HEK293 (cell line): ENCODE measurements at regions of chr19 and their contacts with region 1.

Region 1: GRCh38 chr19:44770550-44771257 is 7.0 kb upstream of the CBLC start:
- H3K4me3 ChIP-seq: no peak overlapping the region
- H3K27ac ChIP-seq: no peak overlapping the region
- H3K4me1 ChIP-seq: 0 out of 2 replicates have a peak, but pooled peaks cover 4% of the 10 kb centered on the region
- CTCF ChIP-seq: peak; percentile 77

Region 2: GRCh38 chr19:44576843-44577565 is 193.7 kb before region 1 on chr19:
- CTCF ChIA-PET with region 1: interaction called, 30 read pairs
- POLR2A ChIA-PET with region 1: no interaction called
- H3K4me3 ChIP-seq: no peak overlapping the region
- H3K27ac ChIP-seq: no peak overlapping the region
- H3K4me1 ChIP-seq: no peaks in the 10 kb centered on the region
- CTCF ChIP-seq: peak; percentile 50

Region 3: DNA sequence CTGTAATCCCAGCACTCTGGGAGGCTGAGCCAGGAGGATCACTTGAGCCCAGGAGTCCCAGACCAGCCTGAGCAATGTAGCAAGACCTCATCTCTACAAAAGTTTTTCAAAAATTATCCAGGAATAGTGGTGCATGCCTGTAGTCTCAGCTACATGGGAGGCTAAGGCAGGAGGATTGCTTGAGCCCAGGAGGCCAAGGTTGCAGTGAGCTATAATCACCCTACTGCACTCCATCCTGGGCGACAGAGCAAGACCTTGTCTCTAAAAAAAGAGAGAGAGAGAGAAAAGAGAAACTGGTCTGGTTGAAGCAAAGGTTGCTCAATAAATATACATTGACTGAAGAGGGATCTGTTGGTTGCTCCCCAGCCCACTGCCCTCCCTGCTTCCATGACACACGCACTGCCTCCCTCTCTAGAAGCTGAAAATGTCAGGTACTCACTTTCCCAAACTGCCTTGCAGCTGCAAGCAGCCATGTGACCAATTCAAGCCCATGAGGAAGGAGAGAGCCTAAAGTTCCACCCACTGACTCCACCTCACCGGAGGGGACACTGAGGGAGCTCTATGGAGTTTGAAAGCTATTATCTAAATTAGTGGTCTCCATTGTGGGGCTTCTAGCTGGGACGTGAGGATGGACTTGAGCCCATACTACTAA is 57.7 kb before region 1 on chr19:
- CTCF ChIA-PET with region 1: interaction called, 14 read pairs
- POLR2A ChIA-PET with region 1: interaction called, 7 read pairs
- H3K4me3 ChIP-seq: no peak overlapping the region
- H3K27ac ChIP-seq: no peak overlapping the region
- H3K4me1 ChIP-seq: no peaks in the 10 kb centered on the region
- CTCF ChIP-seq: no peak

Region 4: DNA sequence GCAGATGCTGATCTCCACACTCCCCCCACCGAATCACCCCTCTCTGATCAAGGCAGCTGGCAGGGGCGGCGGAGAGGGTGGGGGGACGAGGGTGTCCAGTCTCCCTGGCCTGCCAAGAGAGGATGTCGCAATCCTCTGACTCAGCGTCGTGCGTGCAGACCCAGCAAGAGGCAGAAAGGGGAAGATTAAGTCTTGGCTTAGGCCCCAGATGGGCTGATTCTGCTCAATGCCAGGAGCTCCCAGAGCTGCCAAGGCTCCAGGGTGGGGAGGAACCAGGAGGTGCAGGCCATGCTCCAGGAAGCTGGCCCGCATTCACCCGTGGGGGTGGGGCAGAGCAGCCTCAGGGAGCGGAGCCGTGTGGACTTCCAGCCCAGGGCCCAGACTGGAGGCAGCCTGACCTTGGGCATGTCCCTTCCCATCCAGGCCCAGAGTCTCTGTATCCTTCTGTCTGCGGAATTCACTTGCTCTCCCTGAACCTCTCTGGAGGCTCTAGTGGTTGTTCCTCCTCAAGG is 28.8 kb before region 1 on chr19:
- CTCF ChIA-PET with region 1: interaction called, 23 read pairs
- POLR2A ChIA-PET with region 1: interaction called, 4 read pairs
- H3K4me3 ChIP-seq: no peak overlapping the region
- H3K27ac ChIP-seq: peak overlapping the region; percentile 74
- H3K4me1 ChIP-seq: peaks cover 4% of the 10 kb centered on the region
- CTCF ChIP-seq: no peak

Region 5: DNA sequence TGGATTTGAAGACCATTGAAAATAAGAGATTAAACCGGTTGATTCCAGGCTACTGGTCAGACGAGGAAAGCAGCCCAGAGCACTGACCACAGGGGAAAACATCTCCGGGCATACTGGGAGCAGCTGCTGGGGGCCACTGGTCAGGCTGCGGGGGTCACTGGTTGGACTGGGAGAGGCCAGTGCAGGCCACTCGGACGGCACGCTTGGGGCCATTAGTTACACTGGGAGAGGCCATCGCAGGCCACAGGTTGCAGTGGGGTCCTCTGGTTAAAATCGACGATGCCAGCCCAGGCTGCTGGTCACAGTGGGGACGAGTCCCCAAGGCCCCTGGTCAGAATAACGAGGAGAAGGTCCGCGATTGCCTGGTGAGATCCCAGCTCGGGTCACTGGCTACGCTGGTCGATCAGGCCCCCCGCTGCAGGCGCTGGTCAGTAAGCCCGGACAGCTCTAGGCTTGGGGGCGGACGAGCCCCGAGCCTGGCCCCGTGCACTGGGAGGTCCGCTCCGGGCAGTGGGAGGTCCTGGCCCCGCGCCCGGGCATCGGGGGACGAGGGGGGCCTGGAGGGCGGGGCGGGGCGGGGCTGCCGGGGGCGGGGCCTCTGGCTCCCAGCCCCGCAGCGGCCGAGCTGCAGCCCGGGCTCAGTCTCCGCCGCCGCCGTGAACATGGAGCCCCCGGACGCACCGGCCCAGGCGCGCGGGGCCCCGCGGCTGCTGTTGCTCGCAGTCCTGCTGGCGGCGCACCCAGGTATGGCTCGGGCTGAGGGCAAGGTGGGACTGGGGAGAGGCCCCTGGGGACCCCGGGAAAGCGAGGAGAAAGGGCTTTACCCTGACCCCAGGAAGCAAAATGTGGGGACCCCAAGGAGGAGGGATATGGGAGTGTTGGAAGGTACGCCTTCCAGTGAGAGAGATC is 38.0 kb after region 1 on chr19 and contains the start of gene BCAM:
- CTCF ChIA-PET with region 1: interaction called, 13 read pairs
- POLR2A ChIA-PET with region 1: no interaction called
- H3K4me3 ChIP-seq: peak within 1 kb of the TSS; percentile 58
- H3K27ac ChIP-seq: peak within 1 kb of the TSS; percentile 64; the same call in 1 of the 2 replicates
- H3K4me1 ChIP-seq: peaks cover 8% of the 10 kb centered on the region
- CTCF ChIP-seq: no peak

Region 6: DNA sequence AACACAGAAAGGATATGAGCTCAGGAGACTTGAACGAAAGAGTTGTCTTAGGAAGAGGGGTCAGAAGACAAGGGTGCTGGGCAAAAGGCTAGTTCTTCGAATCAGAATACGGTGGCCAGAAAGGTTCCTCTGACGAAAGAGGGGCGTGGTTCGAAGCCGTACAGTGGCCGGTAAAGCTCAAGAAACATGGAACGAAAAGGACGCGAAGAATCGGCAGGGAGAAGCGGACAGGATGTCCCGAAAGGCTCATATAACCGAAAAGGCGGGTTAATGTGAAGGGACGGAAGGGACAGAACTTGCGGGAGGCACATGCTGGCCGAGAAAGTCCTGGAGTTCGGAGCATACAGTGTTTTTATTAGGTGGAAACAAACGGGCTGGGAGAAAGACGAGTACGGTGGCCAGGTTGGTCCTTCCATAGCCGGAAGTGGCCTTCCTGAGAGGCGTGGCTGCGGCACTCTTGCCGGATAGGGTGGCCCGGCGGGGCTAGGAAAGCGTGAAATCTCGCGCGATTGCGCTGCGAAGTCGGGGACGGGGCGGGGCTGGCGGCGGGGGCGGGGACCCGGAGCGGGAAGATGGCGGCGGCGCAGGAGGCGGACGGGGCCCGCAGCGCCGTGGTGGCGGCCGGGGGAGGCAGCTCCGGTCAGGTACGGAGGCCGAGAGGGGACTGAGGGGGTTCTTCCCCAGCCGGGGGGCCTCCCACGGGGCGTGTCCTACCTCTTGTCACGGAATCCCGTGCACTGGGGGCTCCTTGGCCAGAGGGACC is 184.3 kb after region 1 on chr19 and contains the start of gene CLPTM1:
- CTCF ChIA-PET with region 1: interaction called, 10 read pairs
- POLR2A ChIA-PET with region 1: interaction called, 4 read pairs
- H3K4me3 ChIP-seq: peak within 1 kb of the TSS; percentile 79
- H3K27ac ChIP-seq: peak within 1 kb of the TSS; percentile 74
- H3K4me1 ChIP-seq: peaks cover 13% of the 10 kb centered on the region
- CTCF ChIP-seq: no peak; the same call in 1 of the 2 replicates

Region 7: DNA sequence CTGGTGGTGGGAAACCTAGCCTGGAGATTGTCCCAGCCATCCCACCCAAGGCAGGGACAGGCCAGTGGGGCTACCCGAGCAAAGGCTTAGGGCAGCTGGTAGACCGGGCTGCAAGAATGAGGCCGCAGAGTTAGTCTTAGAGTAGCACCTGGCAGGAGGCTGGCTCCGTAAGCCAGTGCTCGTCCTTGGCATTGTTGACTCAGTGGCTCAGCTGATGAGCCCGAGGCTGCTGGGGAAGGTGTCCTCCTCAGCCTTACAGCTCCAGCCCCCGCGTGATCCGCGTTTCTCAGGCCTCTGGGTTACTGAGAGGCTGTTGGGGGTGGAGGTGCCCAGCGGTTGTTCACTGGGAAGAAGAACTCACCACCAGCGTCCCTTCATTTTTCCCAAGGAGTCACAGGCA is 347.0 kb after region 1 on chr19:
- CTCF ChIA-PET with region 1: no interaction called
- POLR2A ChIA-PET with region 1: no interaction called
- H3K4me3 ChIP-seq: no peak overlapping the region
- H3K27ac ChIP-seq: 0 out of 2 replicates have a peak overlapping the region, but pooled peaks have one; percentile 31
- H3K4me1 ChIP-seq: peaks cover 26% of the 10 kb centered on the region
- CTCF ChIP-seq: no peak